AG04449 (cell line): ENCODE measurements at regions of chr3 and their contacts with region 1.

Region 1: DNA sequence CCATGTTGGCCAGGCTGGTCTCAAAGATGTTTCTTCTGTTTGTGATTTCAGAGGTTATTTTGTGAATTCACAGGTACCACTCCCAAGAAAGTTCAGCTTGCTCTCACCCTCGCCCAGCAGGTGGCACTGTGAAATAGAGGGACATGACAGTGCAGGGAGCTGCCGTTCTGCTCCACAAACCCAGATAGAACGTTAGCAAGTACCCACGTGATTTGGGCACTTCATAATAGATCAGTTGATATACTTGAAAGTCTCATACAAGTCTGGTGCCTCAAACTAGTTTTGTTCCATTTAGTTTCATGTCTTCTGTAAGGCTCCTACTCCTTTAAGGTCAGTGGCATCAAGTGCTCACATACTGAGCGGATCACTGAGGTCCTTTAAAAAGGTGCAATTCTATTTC is 45.5 kb downstream of the FILIP1L start:
- DNase-seq: no peak
- H3K4me3 ChIP-seq: no peak overlapping the region
- CTCF ChIP-seq: peak; percentile 76

Region 2: GRCh38 chr3:100057716-100058575 is 10.9 kb before region 1 on chr3:
- CTCF ChIA-PET with region 1: interaction called, 34 read pairs
- POLR2A ChIA-PET with region 1: no interaction called
- DNase-seq: no peak
- H3K4me3 ChIP-seq: no peak overlapping the region
- CTCF ChIP-seq: no peak

Region 3: GRCh38 chr3:100084100-100084806 is 15.4 kb after region 1 on chr3:
- CTCF ChIA-PET with region 1: interaction called, 13 read pairs
- POLR2A ChIA-PET with region 1: no interaction called
- DNase-seq: no peak
- H3K4me3 ChIP-seq: no peak overlapping the region
- CTCF ChIP-seq: no peak

Region 4: GRCh38 chr3:100254168-100254777 is 185.4 kb after region 1 on chr3:
- CTCF ChIA-PET with region 1: interaction called, 54 read pairs
- POLR2A ChIA-PET with region 1: interaction called, 4 read pairs
- DNase-seq: peak; percentile 44
- H3K4me3 ChIP-seq: no peak overlapping the region
- CTCF ChIP-seq: peak; percentile 64

Region 5: DNA sequence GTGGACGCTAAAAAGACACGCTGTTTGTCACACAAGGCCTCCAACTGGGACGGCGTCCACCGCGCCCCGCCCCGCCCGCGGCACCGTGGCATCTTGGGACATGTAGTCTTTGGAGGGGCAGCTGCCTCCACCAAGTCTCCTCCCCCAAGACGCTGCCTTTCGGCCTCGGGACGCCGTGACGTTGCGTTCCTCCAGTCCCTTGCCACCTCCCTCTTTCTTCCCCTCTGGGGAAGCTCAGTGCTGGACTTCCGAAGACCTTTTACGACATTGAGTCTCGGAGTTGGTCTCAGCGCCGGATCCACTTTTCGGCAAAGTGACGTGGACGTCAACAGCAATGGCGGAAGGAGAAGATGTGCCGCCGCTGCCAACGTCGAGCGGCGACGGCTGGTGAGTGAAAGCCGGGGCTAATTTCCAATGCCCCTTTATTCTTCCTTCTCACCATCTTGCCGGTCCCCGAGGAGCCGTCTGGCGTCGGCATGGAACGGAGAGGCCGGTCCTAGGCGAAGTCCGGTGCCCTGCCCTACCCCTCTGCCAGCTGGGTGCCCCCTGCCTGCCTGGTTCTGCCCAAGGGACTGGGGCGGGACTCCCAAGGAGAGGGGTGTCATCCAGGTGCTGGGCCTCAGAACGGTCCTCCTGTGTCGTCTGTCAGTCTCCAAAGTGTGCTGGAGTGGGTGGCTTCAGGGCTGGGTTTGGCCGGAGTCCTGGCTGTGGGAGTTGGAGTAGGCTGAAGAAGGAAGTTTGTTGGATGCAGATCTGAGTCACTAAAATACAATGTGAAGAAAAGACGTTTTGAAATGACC is 192.1 kb after region 1 on chr3 and contains the start of gene TBC1D23:
- CTCF ChIA-PET with region 1: interaction called, 54 read pairs
- POLR2A ChIA-PET with region 1: no interaction called
- DNase-seq: peak; percentile 98
- H3K4me3 ChIP-seq: peak within 1 kb of the TSS; percentile 97
- CTCF ChIP-seq: no peak

Region 6: GRCh38 chr3:100412912-100413590 is 344.2 kb after region 1 on chr3:
- CTCF ChIA-PET with region 1: no interaction called
- POLR2A ChIA-PET with region 1: no interaction called
- DNase-seq: no peak
- H3K4me3 ChIP-seq: no peak overlapping the region
- CTCF ChIP-seq: no peak

Region 7: DNA sequence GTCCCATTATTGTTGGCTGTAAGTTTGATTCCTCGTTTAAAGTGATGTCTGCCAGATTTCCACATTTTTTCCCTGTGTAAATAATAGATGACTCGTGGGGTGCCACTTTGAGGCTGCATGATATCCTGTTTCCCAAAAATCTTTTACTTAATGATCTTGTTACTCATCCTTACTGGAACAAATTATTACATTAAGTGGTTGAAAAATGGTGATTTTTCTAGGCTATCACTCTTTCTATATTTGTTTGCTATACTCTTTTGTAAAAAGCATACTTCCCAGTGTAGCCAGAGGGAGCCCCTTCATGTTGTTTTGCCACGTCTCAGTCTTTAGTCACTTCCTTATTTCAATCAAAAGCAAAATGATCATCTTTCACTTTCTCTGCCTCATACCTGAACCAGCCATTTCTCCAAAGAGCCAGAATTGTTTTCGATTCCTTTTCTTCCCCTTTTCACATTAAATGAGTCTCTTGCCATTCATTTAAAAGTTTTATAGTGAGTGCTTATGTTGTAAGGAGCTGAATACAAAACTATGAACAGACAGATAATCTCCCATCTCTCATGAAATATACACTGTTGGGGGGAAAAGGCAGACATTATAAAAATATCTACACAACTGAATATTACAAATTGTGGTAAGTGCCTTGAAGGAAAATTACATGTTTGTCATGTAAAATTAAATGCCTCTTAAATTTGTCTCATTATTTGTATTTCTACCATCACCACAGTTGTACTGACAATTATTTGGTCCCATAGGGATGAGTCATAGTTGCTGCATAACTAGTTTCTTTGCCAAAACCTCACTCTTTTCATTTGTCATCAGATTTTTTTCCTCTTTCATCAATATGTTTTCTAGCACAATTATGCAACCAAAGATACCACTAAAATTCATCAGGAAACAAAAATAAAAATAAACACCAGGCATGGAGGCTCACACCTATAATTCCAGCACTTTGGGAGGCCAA is 582.1 kb after region 1 on chr3:
- CTCF ChIA-PET with region 1: no interaction called
- POLR2A ChIA-PET with region 1: no interaction called
- DNase-seq: no peak
- H3K4me3 ChIP-seq: no peak overlapping the region
- CTCF ChIP-seq: no peak